IMR-90 (cell line): ENCODE measurements at regions of chr6 and their contacts with region 1.

Region 1: DNA sequence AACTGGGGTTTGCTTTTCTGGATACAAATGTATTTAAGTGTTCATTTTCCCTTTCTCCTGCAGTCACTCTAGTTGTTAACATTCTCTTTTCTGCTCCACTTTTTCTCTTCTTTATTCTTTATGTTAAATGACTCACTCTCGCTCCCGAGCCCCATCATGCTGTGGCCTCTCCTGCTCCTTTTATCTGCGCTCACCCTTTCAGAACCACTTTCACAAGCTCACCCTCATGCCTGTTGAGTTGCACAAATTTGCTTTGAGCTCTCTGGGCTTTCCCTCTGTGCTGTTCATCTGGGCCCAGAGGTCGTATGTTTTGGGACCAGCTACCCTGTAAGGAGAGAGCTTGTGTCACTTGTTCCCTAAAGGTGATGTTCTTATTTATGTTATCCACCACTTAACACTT is 98.1 kb upstream of the ASCC3 start:
- DNase-seq: no peak
- ATAC-seq: no peak
- H3K4me3 ChIP-seq: no peak overlapping the region
- H3K27ac ChIP-seq: no peak overlapping the region
- H3K4me1 ChIP-seq: no peaks in the 10 kb centered on the region
- H3K27me3 ChIP-seq: no peaks in the 10 kb centered on the region
- CTCF ChIP-seq: no peak
- POLR2A ChIP-seq: no peak
- RAD21 ChIP-seq: no peak

Region 2: GRCh38 chr6:99689916-99690685 is 1289.2 kb before region 1 on chr6:
- CTCF ChIA-PET with region 1: no interaction called
- POLR2A ChIA-PET with region 1: interaction called, 10 read pairs
- dilution Hi-C with region 1: no loop called
- in situ Hi-C with region 1: no loop called
- intact Hi-C with region 1: no loop called
- DNase-seq: no peak
- ATAC-seq: no peak
- H3K4me3 ChIP-seq: no peak overlapping the region
- H3K27ac ChIP-seq: no peak overlapping the region
- H3K4me1 ChIP-seq: no peaks in the 10 kb centered on the region
- H3K27me3 ChIP-seq: no peaks in the 10 kb centered on the region
- CTCF ChIP-seq: no peak
- POLR2A ChIP-seq: no peak
- RAD21 ChIP-seq: no peak